CD8-positive, alpha-beta T cell (primary cell): ENCODE measurements at regions of chr18 and their contacts with region 1.

Region 1: GRCh38 chr18:5073026-5073944 is 123.8 kb downstream of the AKAIN1 start:
- DNase-seq: peak in 2 of 9 experiments; percentile 39 to 61
- ATAC-seq: peak; percentile 67
- H3K4me3 ChIP-seq: no peak overlapping the region
- H3K4me3 Mint-ChIP-seq: no peak overlapping the region
- H3K27ac ChIP-seq: no peak overlapping the region
- H3K27ac Mint-ChIP-seq: no peak overlapping the region
- H3K4me1 ChIP-seq: no peaks in the 10 kb centered on the region
- H3K4me1 Mint-ChIP-seq: peaks cover 3% of the 10 kb centered on the region
- H3K27me3 ChIP-seq: no peaks in the 10 kb centered on the region
- H3K27me3 Mint-ChIP-seq: peaks cover 2% of the 10 kb centered on the region
- CTCF ChIP-seq: peak; percentile 69

Region 2: GRCh38 chr18:5021558-5021957 is 51.7 kb before region 1 on chr18:
- CTCF ChIA-PET with region 1: no interaction called
- POLR2A ChIA-PET with region 1: no interaction called
- intact Hi-C with region 1: no loop called
- DNase-seq: no peak
- ATAC-seq: no peak
- H3K4me3 ChIP-seq: no peak overlapping the region
- H3K4me3 Mint-ChIP-seq: no peak overlapping the region
- H3K27ac ChIP-seq: no peak overlapping the region
- H3K27ac Mint-ChIP-seq: no peak overlapping the region
- H3K4me1 ChIP-seq: no peaks in the 10 kb centered on the region
- H3K4me1 Mint-ChIP-seq: no peaks in the 10 kb centered on the region
- H3K27me3 ChIP-seq: no peaks in the 10 kb centered on the region
- H3K27me3 Mint-ChIP-seq: peaks cover 3% of the 10 kb centered on the region
- CTCF ChIP-seq: no peak

Region 3: DNA sequence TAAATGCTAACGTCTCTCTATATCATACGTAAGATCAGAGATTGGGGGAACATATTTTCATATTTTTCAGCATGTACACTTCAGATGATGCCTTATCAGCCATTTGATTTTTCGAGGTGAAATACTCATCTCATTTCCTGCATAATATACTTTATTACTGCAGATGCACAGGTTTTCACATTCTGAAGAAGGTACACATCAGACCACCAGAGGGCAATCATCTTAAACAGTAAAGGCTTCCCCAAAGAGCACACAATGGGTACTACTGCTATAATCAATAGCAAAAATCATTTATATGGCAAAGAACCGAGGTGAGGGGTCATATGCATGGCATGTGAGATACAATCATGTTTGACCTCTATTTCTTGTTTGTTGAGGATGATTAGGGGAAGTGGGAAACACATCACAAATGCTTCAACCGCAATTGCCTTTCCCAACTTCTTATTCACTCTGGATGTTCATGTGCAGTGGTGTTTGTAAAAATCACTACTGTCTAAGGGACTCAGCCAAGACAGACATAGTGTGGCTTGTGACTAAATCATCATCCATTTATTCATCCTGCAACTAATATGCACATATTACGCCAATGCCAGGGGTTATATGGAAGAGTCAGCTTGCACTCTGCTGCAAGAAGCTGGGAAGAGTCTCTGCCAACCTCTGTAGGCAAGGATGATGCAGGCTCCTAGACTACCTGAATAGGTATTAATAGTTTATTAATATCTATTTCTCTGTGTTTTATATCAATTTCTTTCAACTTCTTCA is 351.8 kb after region 1 on chr18:
- CTCF ChIA-PET with region 1: no interaction called
- POLR2A ChIA-PET with region 1: no interaction called
- intact Hi-C with region 1: loop called in 1 of 2 experiments (anchors 10 kb)
- DNase-seq: peak in 2 of 9 experiments; percentile 25 to 48
- ATAC-seq: peak; percentile 48
- H3K4me3 ChIP-seq: no peak overlapping the region
- H3K4me3 Mint-ChIP-seq: no peak overlapping the region
- H3K27ac ChIP-seq: no peak overlapping the region
- H3K27ac Mint-ChIP-seq: no peak overlapping the region
- H3K4me1 ChIP-seq: no peaks in the 10 kb centered on the region
- H3K4me1 Mint-ChIP-seq: no peaks in the 10 kb centered on the region
- H3K27me3 ChIP-seq: peaks cover 2 to 3% of the 10 kb centered on the region in 2 experiments
- H3K27me3 Mint-ChIP-seq: peaks cover 6% of the 10 kb centered on the region
- CTCF ChIP-seq: peak; percentile 65

Region 4: DNA sequence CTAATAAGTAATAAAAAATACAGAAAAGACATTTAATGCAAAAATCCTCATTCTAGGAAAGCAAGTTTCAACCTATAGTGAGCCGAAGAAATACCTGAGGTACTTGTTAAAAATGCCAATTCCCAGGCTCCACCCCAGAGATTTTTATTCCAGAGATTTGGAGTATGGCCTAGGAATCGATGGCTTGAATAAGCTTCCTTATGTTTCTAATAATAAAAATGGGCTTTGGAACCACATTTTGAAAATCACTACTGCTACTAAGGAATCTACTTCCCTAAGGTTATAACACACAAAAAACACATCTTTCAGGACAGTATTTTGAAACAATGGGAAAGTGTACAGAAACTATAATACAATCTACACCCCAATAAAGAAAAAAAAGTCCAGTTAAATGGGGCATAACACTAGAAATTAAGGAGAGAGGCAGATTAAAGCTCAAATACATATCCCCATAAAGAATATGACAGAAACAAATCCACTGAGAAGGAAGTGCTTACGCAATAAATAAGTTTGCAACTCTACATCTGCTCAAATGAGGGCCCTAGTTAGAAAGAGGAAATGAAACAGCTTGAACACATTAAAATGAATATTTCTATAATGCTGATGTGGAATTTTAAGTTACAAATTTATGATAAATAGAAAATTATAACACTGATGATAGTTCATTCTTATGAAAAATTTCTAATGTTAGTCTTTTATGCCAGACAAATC is 366.9 kb after region 1 on chr18:
- CTCF ChIA-PET with region 1: no interaction called
- POLR2A ChIA-PET with region 1: no interaction called
- intact Hi-C with region 1: loop called in 1 of 2 experiments (anchors 10 kb)
- DNase-seq: no peak
- ATAC-seq: no peak
- H3K4me3 ChIP-seq: no peak overlapping the region
- H3K4me3 Mint-ChIP-seq: no peak overlapping the region
- H3K27ac ChIP-seq: no peak overlapping the region
- H3K27ac Mint-ChIP-seq: no peak overlapping the region
- H3K4me1 ChIP-seq: no peaks in the 10 kb centered on the region
- H3K4me1 Mint-ChIP-seq: no peaks in the 10 kb centered on the region
- H3K27me3 ChIP-seq: peaks cover 0 to 2% of the 10 kb centered on the region in 2 experiments
- H3K27me3 Mint-ChIP-seq: no peaks in the 10 kb centered on the region
- CTCF ChIP-seq: no peak

Region 5: DNA sequence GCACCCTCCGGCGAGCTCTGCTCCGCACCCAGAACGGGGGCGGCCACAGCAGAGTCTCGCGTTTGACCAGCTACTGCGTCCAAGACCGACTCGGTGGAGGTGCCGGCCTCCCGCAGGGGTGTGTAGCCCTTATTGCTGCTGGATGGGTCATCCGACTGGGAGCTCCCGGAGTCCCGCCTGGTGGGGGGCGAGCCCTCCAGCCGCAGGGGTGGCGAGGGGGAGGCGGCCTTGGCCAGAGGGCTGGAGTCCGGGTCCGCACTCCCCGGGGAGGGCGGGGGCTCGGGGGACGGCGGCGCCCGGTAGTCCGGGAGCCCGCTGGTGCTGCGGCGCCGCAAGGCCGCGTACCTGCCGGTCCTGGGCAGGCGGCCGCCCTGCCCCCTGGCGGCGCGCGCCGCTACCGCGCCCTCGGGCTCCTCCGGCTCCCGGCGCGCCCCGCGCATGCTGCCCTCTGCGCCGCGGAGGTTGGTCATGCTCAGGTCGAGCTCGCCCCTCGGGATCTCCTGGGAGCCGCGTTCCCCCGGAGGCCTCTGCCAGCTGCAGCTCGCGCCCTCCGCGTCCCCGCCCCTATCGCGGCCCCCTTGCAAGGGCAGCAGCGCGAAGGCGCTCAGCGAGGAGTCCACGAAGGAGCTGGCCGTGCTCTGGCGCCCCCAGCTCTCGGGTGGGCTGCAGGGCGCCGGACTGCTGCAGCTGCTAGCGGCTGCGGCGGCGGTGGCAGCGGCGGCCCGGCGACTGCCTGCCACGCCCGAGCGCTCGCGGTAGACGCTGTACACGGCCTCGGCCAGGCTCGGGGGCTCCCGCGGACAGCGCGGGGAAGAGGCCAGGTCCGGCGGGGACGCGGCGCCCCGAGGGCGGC is 817.3 kb after region 1 on chr18:
- CTCF ChIA-PET with region 1: interaction called, 7 read pairs
- POLR2A ChIA-PET with region 1: no interaction called
- intact Hi-C with region 1: loop called in 1 of 2 experiments (anchors 2 kb)
- DNase-seq: peak in 4 of 9 experiments; percentile 28 to 57 (median 48)
- ATAC-seq: peak; percentile 61
- H3K4me3 ChIP-seq: no peak overlapping the region
- H3K4me3 Mint-ChIP-seq: peak overlapping the region; percentile 35
- H3K27ac ChIP-seq: no peak overlapping the region
- H3K27ac Mint-ChIP-seq: no peak overlapping the region
- H3K4me1 ChIP-seq: no peaks in the 10 kb centered on the region
- H3K4me1 Mint-ChIP-seq: peaks cover 14% of the 10 kb centered on the region
- H3K27me3 ChIP-seq: peaks cover 14 to 16% of the 10 kb centered on the region in 2 experiments
- H3K27me3 Mint-ChIP-seq: peaks cover 52% of the 10 kb centered on the region
- CTCF ChIP-seq: peak; percentile 46

Region 6: GRCh38 chr18:6174983-6175382 is 1101.7 kb after region 1 on chr18:
- CTCF ChIA-PET with region 1: no interaction called
- POLR2A ChIA-PET with region 1: no interaction called
- intact Hi-C with region 1: no loop called
- DNase-seq: no peak
- ATAC-seq: no peak
- H3K4me3 ChIP-seq: no peak overlapping the region
- H3K4me3 Mint-ChIP-seq: no peak overlapping the region
- H3K27ac ChIP-seq: no peak overlapping the region
- H3K27ac Mint-ChIP-seq: no peak overlapping the region
- H3K4me1 ChIP-seq: no peaks in the 10 kb centered on the region
- H3K4me1 Mint-ChIP-seq: no peaks in the 10 kb centered on the region
- H3K27me3 ChIP-seq: no peaks in the 10 kb centered on the region
- H3K27me3 Mint-ChIP-seq: no peaks in the 10 kb centered on the region
- CTCF ChIP-seq: no peak

Region 7: GRCh38 chr18:6476190-6476589 is 1402.9 kb after region 1 on chr18:
- CTCF ChIA-PET with region 1: no interaction called
- POLR2A ChIA-PET with region 1: no interaction called
- intact Hi-C with region 1: loop called in 1 of 2 experiments (anchors 5 kb)
- DNase-seq: no peak
- ATAC-seq: no peak
- H3K4me3 ChIP-seq: no peak overlapping the region
- H3K4me3 Mint-ChIP-seq: no peak overlapping the region
- H3K27ac ChIP-seq: no peak overlapping the region
- H3K27ac Mint-ChIP-seq: no peak overlapping the region
- H3K4me1 ChIP-seq: no peaks in the 10 kb centered on the region
- H3K4me1 Mint-ChIP-seq: no peaks in the 10 kb centered on the region
- H3K27me3 ChIP-seq: no peaks in the 10 kb centered on the region
- H3K27me3 Mint-ChIP-seq: peaks cover 4% of the 10 kb centered on the region
- CTCF ChIP-seq: no peak

Region 8: GRCh38 chr18:6885992-6886796 is 1812.9 kb after region 1 on chr18:
- CTCF ChIA-PET with region 1: no interaction called
- POLR2A ChIA-PET with region 1: no interaction called
- intact Hi-C with region 1: loop called in 1 of 2 experiments (anchors 10 kb)
- DNase-seq: peak in 1 of 9 experiments; percentile 3
- ATAC-seq: no peak
- H3K4me3 ChIP-seq: no peak overlapping the region
- H3K4me3 Mint-ChIP-seq: no peak overlapping the region
- H3K27ac ChIP-seq: no peak overlapping the region
- H3K27ac Mint-ChIP-seq: no peak overlapping the region
- H3K4me1 ChIP-seq: no peaks in the 10 kb centered on the region
- H3K4me1 Mint-ChIP-seq: no peaks in the 10 kb centered on the region
- H3K27me3 ChIP-seq: no peaks in the 10 kb centered on the region
- H3K27me3 Mint-ChIP-seq: no peaks in the 10 kb centered on the region
- CTCF ChIP-seq: no peak